Heart left ventricle (tissue), 16 donors: ENCODE measurements at regions of chr16 and their contacts with region 1.

Region 1: GRCh38 chr16:56191156-56191815 is at the start of gene GNAO1:
- DNase-seq: peak; percentile 79 to 86 (median 82)
- ATAC-seq: peak; percentile 48 to 92 (median 86)
- H3K4me3 ChIP-seq: peak within 1 kb of the TSS; percentile 53 to 91 (median 74)
- H3K27ac ChIP-seq: peak within 1 kb of the TSS; percentile 85 to 95 (median 91)
- H3K4me1 ChIP-seq: peaks cover 0 to 50% (median 15%) of the 10 kb centered on the region in 12 donors
- H3K27me3 ChIP-seq: peaks cover 0 to 63% (median 0%) of the 10 kb centered on the region in 9 donors
- CTCF ChIP-seq: peak in 1 of 12 donors; percentile 16
- POLR2A ChIP-seq: peak in 1 of 2 donors; percentile 19
- total RNA-seq, gene GNAO1: 8.1 to 26.8 (median 13.4) TPM

Region 2: DNA sequence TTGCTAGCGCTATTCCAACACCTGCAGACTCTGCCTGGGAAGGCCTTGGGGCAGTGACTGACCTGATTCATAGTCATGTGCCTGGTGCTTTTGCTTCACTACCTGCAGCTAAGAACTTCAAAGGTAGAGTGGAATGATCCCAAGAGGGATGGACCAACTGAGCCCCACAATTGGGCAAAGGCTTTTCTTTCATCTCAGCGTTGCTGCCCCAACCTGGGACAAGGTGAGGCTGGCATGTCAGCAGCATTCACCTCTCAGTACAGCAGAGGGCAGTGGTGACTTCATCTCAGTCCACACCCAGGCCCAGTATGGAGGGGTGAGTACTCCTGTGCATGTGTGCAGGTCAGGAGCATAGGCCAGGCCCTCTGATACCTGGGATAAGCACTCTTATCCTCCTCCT is 149.6 kb before region 1 on chr16:
- intact Hi-C with region 1: loop called in 6 of 10 experiments (anchors 2 to 10 kb)
- DNase-seq: peak in 4 of 5 donors; percentile 22 to 37 (median 30)
- ATAC-seq: peak; percentile 69 to 93 (median 92)
- H3K4me3 ChIP-seq: no peak overlapping the region
- H3K27ac ChIP-seq: no peak overlapping the region
- H3K4me1 ChIP-seq: peaks cover 0 to under 1% (median 0%) of the 10 kb centered on the region in 12 donors
- H3K27me3 ChIP-seq: no peaks in the 10 kb centered on the region
- CTCF ChIP-seq: peak in 11 of 12 donors; percentile 32 to 57 (median 46)
- POLR2A ChIP-seq: no peak

Region 3: DNA sequence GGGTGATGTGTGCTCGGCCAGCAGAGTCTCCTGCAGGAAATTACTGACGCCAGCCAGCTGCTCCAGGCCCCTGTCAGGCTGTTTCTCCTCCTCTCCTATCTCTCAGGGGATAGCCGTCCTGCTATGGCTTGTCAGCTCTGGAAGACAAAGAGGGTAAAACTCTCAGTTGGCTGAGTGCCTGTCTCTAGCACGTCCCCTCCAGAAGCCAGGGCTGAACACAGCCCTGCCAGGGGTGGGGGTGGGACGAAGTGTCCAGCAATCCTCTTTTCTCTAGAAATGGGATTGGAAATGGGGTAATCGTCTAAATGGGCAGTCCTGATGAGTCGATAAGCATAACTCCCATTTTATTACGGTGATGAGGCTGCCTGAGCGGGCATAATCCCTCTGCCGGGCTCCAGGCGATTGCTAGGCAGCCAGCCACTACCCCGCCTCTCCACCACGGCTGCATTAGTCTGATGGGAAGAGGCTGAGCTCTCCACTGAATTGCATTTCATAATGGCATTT is 89.1 kb before region 1 on chr16:
- intact Hi-C with region 1: loop called in 3 of 10 experiments (anchors 5 kb)
- DNase-seq: peak; percentile 47 to 73 (median 66)
- ATAC-seq: peak; percentile 84 to 90 (median 90)
- H3K4me3 ChIP-seq: peak overlapping the region in 10 of 12 donors; percentile 28 to 58 (median 38)
- H3K27ac ChIP-seq: peak overlapping the region; percentile 34 to 79 (median 62)
- H3K4me1 ChIP-seq: peaks cover 0 to 18% (median 8%) of the 10 kb centered on the region in 12 donors
- H3K27me3 ChIP-seq: no peaks in the 10 kb centered on the region
- CTCF ChIP-seq: no peak
- POLR2A ChIP-seq: no peak

Region 4: GRCh38 chr16:56257239-56257638 is 66.0 kb after region 1 on chr16:
- intact Hi-C with region 1: loop called in 2 of 10 experiments (anchors 5 to 10 kb)
- DNase-seq: peak; percentile 68 to 90 (median 75)
- ATAC-seq: peak in 3 of 4 donors; percentile 13 to 35 (median 27)
- H3K4me3 ChIP-seq: no peak overlapping the region
- H3K27ac ChIP-seq: peak overlapping the region in 9 of 12 donors; percentile 6 to 89 (median 55)
- H3K4me1 ChIP-seq: peaks cover 0 to 72% (median 40%) of the 10 kb centered on the region in 12 donors
- H3K27me3 ChIP-seq: no peaks in the 10 kb centered on the region
- CTCF ChIP-seq: no peak
- POLR2A ChIP-seq: no peak

Region 5: GRCh38 chr16:56317998-56318826 is 126.9 kb after region 1 on chr16:
- intact Hi-C with region 1: loop called in 7 of 10 experiments (anchors 2 to 10 kb)
- DNase-seq: peak; percentile 81 to 91 (median 86)
- ATAC-seq: peak; percentile 91 to 99 (median 96)
- H3K4me3 ChIP-seq: peak overlapping the region in 10 of 12 donors; percentile 16 to 49 (median 34)
- H3K27ac ChIP-seq: no peak overlapping the region
- H3K4me1 ChIP-seq: peaks cover 0 to 9% (median 4%) of the 10 kb centered on the region in 12 donors
- H3K27me3 ChIP-seq: no peaks in the 10 kb centered on the region
- CTCF ChIP-seq: peak; percentile 92 to 97 (median 94)
- POLR2A ChIP-seq: no peak